ENCODE measurements at regions of chr1 and their contacts with region 1.

Region 1: DNA sequence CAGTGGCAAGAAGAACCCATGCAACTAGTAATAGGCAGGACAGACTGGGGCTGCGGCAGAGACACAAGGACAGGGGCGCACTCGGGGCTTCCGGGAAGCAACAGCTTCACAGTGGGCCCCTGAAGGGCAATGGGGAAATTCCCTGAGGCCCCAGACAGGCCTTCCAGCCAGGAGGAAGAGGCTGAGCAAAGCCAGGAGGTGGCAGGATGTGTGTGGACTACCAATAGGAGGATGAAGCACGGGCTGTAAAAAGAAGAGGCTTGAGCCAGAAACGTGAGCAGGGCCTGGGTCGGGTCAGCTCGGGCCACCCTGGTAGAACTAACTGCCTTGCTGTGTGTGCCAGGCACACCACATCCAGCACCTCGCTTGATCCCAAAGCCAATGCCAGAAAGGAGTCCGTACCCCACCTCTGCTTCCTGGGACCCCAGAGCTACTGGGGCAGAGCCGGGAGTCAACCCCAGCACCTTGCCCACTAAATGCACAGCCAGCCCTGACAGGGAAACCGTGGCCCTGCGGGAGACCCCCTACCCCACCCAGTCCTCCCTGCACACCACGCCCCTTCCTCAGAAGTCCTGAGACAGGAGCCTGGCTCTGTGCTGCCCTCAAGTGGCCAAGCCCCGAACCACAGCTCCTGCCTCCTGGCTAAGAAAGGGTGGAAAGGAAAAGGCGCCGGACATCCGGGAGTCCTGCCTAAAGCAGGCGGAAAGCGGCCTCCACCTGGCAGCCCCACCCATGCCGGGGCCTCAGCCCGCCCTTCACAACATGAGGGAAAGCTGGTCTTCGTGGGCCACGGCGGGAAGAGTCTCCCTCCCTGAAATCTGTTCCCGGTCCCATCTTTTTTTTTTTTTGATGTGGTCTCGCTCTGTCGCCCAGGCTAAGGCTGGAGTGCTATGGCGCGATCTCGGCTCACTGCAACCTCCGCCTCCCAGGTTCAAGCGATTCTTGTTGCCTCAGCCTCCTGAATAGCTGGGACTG is 33.7 kb downstream of the TTC39A start:
- DNase-seq: peak; percentile 81 to 90 (median 84)
- ATAC-seq: peak; percentile 65 to 87 (median 84)
- H3K4me3 ChIP-seq: peak overlapping the region in 11 of 12 donors; percentile 19 to 74 (median 51)
- H3K27ac ChIP-seq: peak overlapping the region in 4 of 12 donors; percentile 1 to 27 (median 8)
- H3K4me1 ChIP-seq: peaks cover 0 to 16% (median 11%) of the 10 kb centered on the region in 12 donors
- H3K27me3 ChIP-seq: no peaks in the 10 kb centered on the region
- CTCF ChIP-seq: peak; percentile 93 to 99 (median 97)
- POLR2A ChIP-seq: no peak

Region 2: GRCh38 chr1:51218570-51218969 is 78.1 kb before region 1 on chr1:
- intact Hi-C with region 1: no loop called
- DNase-seq: no peak
- ATAC-seq: peak in 1 of 4 donors; percentile 33
- H3K4me3 ChIP-seq: no peak overlapping the region
- H3K27ac ChIP-seq: no peak overlapping the region
- H3K4me1 ChIP-seq: peaks cover 0 to 15% (median 0%) of the 10 kb centered on the region in 12 donors
- H3K27me3 ChIP-seq: no peaks in the 10 kb centered on the region
- CTCF ChIP-seq: no peak
- POLR2A ChIP-seq: no peak

Region 3: DNA sequence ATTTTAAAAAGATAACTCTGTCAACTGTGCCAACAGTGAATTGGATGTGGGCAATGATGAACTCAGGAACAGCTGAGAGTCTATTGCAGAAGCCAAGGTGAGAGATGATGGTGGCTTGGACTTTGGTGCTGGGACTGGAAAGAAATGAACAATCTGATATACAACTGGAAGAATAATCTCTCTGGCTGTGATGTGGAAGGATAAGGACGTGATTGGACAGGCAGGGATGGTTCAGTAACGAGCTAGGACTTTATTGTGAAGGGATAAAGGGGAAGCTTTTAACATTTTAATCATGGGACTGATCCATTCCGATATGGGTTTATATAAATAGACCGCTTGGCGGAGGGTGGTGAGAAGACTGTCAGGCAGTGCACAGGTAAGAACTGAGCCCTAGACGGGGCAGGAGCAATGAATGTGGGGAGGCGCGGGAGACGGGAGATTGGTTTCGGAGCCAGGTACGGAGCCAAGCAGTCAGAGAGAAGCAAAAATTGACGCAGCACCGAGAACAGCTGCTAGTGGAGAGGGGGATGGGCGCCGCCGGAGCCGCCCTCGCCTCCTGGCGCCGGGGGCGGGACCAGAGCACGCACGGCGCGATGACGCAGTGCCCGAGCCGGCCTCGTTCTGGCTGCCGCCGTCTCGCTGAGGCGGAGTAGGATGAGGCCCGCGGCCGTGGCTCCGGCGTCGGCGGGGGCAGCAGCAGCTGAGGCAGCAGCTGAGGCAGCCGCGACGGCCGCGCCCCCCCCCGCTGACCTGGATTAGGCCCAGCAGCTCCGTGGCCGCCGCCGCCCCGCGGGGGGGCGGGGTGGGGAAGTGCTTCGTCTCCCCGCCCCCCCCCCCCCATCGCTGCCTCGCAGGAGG is 60.8 kb before region 1 on chr1 and contains the start of gene RNF11:
- intact Hi-C with region 1: loop called in 6 of 10 experiments (anchors 1 to 10 kb)
- DNase-seq: peak; percentile 94 to 96 (median 95)
- ATAC-seq: peak; percentile 93 to 99 (median 98)
- H3K4me3 ChIP-seq: peak within 1 kb of the TSS; percentile 76 to 99 (median 94)
- H3K27ac ChIP-seq: peak within 1 kb of the TSS; percentile 90 to 98 (median 96)
- H3K4me1 ChIP-seq: peaks cover 0 to 44% (median 41%) of the 10 kb centered on the region in 12 donors
- H3K27me3 ChIP-seq: no peaks in the 10 kb centered on the region
- CTCF ChIP-seq: peak in 1 of 12 donors; percentile 9
- POLR2A ChIP-seq: peak; percentile 70 to 96
- total RNA-seq, gene RNF11: 77.3 to 139 (median 107) TPM

Measured in heart left ventricle (tissue), 16 donors.